ENCODE measurements at regions of chr2 and their contacts with region 1.

Region 1: DNA sequence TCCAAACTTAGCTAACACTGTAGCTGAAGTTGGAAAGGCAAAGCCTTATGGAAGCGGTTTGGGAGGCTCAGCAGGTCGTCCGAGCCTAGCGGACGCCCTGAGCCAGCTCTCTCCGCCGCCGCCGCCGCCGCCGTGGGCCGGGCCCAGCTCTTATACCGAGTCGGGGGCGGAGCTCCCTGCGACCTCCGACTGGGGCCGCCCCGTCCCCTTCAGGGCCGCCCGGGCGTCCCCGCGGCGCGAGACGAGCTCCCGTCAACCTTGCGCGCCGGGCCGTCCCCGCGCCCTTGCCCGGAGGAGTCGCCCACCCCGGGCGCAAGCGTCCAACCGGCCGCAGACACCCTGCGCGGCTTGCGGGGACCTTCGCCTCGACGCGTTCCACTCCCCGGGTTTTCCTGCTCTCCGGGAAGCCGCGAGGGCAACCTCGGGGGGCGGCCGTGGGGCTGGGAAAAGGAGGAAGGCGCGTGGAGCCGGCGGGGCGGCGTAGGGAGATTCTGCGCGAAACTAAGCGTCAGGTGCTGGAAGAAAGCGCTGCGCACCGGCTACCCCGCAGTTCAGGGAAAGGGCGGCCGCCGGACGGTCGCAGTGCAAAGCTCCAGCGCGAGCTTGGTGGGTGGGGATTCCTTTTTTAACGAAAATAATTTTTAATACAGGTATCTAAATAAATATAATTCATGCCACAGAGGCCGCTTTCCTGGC is at the start of gene SLC40A1:
- DNase-seq: peak; percentile 66 to 78 (median 72)
- H3K4me3 ChIP-seq: peak within 1 kb of the TSS; percentile 58 to 63
- H3K4me3 Mint-ChIP-seq: peak within 1 kb of the TSS; percentile 91 to 96 (median 94)
- H3K27ac ChIP-seq: peak within 1 kb of the TSS; percentile 46
- H3K27ac Mint-ChIP-seq: peak within 1 kb of the TSS; percentile 71 to 96 (median 90)
- H3K4me1 ChIP-seq: peaks cover 47% of the 10 kb centered on the region
- H3K4me1 Mint-ChIP-seq: peaks cover 33 to 65% (median 47%) of the 10 kb centered on the region in 4 donors
- H3K27me3 ChIP-seq: no peaks in the 10 kb centered on the region
- H3K27me3 Mint-ChIP-seq: peaks cover 1 to 10% of the 10 kb centered on the region in 2 donors
- total RNA-seq, gene SLC40A1: 27.4 to 30.0 TPM

Region 2: GRCh38 chr2:189440947-189441708 is 139.7 kb before region 1 on chr2 and contains the start of gene WDR75:
- CTCF ChIA-PET with region 1: interaction called, 6 read pairs
- POLR2A ChIA-PET with region 1: interaction called, 22 read pairs
- intact Hi-C with region 1: loop called (anchors 1 kb)
- DNase-seq: peak; percentile 93 to 96 (median 95)
- H3K4me3 ChIP-seq: peak within 1 kb of the TSS; percentile 87 to 99
- H3K4me3 Mint-ChIP-seq: peak within 1 kb of the TSS in 6 of 8 donors; percentile 98 to 100 (median 100)
- H3K27ac ChIP-seq: peak within 1 kb of the TSS; percentile 89
- H3K27ac Mint-ChIP-seq: peak within 1 kb of the TSS; percentile 97 to 100 (median 100)
- H3K4me1 ChIP-seq: peaks cover 49% of the 10 kb centered on the region
- H3K4me1 Mint-ChIP-seq: peaks cover 0 to 18% (median 11%) of the 10 kb centered on the region in 4 donors
- H3K27me3 ChIP-seq: no peaks in the 10 kb centered on the region
- H3K27me3 Mint-ChIP-seq: no peaks in the 10 kb centered on the region
- total RNA-seq, gene WDR75: 60.8 to 61.4 TPM

Region 3: GRCh38 chr2:189569295-189569910 is 11.4 kb before region 1 on chr2:
- CTCF ChIA-PET with region 1: interaction called, 3 read pairs
- POLR2A ChIA-PET with region 1: interaction called, 24 read pairs
- intact Hi-C with region 1: loop called (anchors 1 kb)
- DNase-seq: no peak
- H3K4me3 ChIP-seq: no peak overlapping the region
- H3K4me3 Mint-ChIP-seq: peak overlapping the region in 6 of 8 donors; percentile 35 to 73 (median 56)
- H3K27ac ChIP-seq: peak overlapping the region; percentile 22
- H3K27ac Mint-ChIP-seq: peak overlapping the region; percentile 27 to 88 (median 84)
- H3K4me1 ChIP-seq: peaks cover 37% of the 10 kb centered on the region
- H3K4me1 Mint-ChIP-seq: peaks cover 31 to 58% (median 50%) of the 10 kb centered on the region in 4 donors
- H3K27me3 ChIP-seq: no peaks in the 10 kb centered on the region
- H3K27me3 Mint-ChIP-seq: no peaks in the 10 kb centered on the region

Region 4: GRCh38 chr2:189613077-189613636 is 32.4 kb after region 1 on chr2:
- CTCF ChIA-PET with region 1: no interaction called
- POLR2A ChIA-PET with region 1: interaction called, 13 read pairs
- intact Hi-C with region 1: no loop called
- DNase-seq: no peak
- H3K4me3 ChIP-seq: no peak overlapping the region
- H3K4me3 Mint-ChIP-seq: no peak overlapping the region
- H3K27ac ChIP-seq: no peak overlapping the region
- H3K27ac Mint-ChIP-seq: no peak overlapping the region
- H3K4me1 ChIP-seq: peaks cover 4% of the 10 kb centered on the region
- H3K4me1 Mint-ChIP-seq: peaks cover 0 to 2% (median under 1%) of the 10 kb centered on the region in 4 donors
- H3K27me3 ChIP-seq: no peaks in the 10 kb centered on the region
- H3K27me3 Mint-ChIP-seq: no peaks in the 10 kb centered on the region

Region 5: GRCh38 chr2:189762551-189763298 is 181.9 kb after region 1 on chr2 and contains the start of gene OSGEPL1:
- CTCF ChIA-PET with region 1: interaction called, 11 read pairs
- POLR2A ChIA-PET with region 1: interaction called, 14 read pairs
- intact Hi-C with region 1: no loop called
- DNase-seq: peak; percentile 89 to 98 (median 91)
- H3K4me3 ChIP-seq: peak within 1 kb of the TSS; percentile 87 to 94
- H3K4me3 Mint-ChIP-seq: peak within 1 kb of the TSS; percentile 90 to 99 (median 95)
- H3K27ac ChIP-seq: peak within 1 kb of the TSS; percentile 88
- H3K27ac Mint-ChIP-seq: peak within 1 kb of the TSS; percentile 95 to 99 (median 97)
- H3K4me1 ChIP-seq: peaks cover 13% of the 10 kb centered on the region
- H3K4me1 Mint-ChIP-seq: peaks cover 4 to 15% (median 5%) of the 10 kb centered on the region in 4 donors
- H3K27me3 ChIP-seq: no peaks in the 10 kb centered on the region
- H3K27me3 Mint-ChIP-seq: no peaks in the 10 kb centered on the region
- total RNA-seq, gene OSGEPL1: 19.1 TPM

Measured in CD4-positive, alpha-beta memory T cell (primary cell).